Cardiac septum (tissue), 1 donor: ENCODE measurements at regions of chr1 and their contacts with region 1.

Region 1: DNA sequence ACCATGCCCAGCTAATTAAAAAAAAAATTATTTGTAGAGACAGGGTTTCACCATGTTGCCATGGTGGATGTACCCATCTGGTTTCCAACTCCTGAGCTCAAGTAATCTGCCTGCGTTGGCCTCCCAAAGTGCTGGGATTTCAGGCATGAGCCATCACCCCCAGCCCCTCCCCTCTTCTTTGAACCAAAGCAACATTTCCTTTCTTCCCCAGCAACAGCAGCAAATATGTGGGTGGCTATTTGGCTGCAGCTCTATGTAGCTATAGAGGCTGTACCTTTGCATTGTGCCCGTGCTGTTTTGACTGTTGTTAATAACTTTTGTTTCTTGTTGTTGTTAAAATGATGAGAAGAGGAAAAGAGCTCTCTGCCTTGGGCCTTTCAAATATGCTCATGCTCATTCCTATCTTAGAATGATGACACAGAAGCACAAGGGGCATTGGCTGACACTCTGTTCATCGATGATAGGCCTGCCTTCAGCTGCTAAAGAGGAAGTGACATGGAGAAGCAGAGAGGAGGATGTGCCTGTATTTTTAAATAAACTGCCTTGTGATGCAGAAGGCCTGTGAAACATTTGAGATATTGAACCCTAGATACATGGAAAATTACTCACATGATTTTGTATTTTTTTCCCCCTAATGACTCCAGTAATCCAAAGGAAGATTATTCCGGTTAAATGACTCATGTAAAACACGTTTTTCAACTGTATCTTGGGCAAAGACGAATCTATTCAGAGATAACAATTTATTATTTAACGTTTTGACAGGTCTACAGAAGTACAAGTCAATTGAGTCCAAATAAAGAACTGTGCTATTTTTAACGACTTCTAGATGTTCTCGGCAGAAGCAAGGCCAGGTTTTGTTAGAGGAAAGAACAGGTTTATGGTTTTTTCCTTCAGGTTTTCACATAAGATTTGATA is 20.5 kb upstream of the XPR1 start:
- DNase-seq: no peak

Region 2: GRCh38 chr1:180540697-180541594 is 70.3 kb before region 1 on chr1:
- intact Hi-C with region 1: loop called (anchors 5 kb)
- DNase-seq: no peak